ENCODE measurements at regions of chr12 and their contacts with region 1.

Region 1: GRCh38 chr12:54207484-54208294 is 18.9 kb upstream of the SMUG1 start:
- DNase-seq: peak; percentile 58 to 85 (median 80)
- ATAC-seq: peak; percentile 96
- H3K4me3 ChIP-seq: no peak overlapping the region
- H3K4me3 Mint-ChIP-seq: no peak overlapping the region
- H3K27ac ChIP-seq: no peak overlapping the region
- H3K27ac Mint-ChIP-seq: no peak overlapping the region
- H3K4me1 ChIP-seq: no peaks in the 10 kb centered on the region
- H3K4me1 Mint-ChIP-seq: peaks cover 3% of the 10 kb centered on the region
- H3K27me3 ChIP-seq: peaks cover 0 to 13% of the 10 kb centered on the region in 2 experiments
- H3K27me3 Mint-ChIP-seq: peaks cover 39% of the 10 kb centered on the region
- CTCF ChIP-seq: peak; percentile 85

Region 2: GRCh38 chr12:53295070-53295890 is 912.4 kb before region 1 on chr12 and contains the start of gene PFDN5:
- CTCF ChIA-PET with region 1: no interaction called
- POLR2A ChIA-PET with region 1: no interaction called
- intact Hi-C with region 1: no loop called
- DNase-seq: peak; percentile 72 to 95 (median 87)
- ATAC-seq: peak; percentile 92
- H3K4me3 ChIP-seq: peak within 1 kb of the TSS; percentile 75 to 88
- H3K4me3 Mint-ChIP-seq: peak within 1 kb of the TSS; percentile 99
- H3K27ac ChIP-seq: peak within 1 kb of the TSS; percentile 80 to 82
- H3K27ac Mint-ChIP-seq: peak within 1 kb of the TSS; percentile 99
- H3K4me1 ChIP-seq: peaks cover 28% of the 10 kb centered on the region
- H3K4me1 Mint-ChIP-seq: peaks cover 51% of the 10 kb centered on the region
- H3K27me3 ChIP-seq: no peaks in the 10 kb centered on the region
- H3K27me3 Mint-ChIP-seq: no peaks in the 10 kb centered on the region
- CTCF ChIP-seq: no peak
- total RNA-seq, gene PFDN5: 741 to 751 TPM

Region 3: DNA sequence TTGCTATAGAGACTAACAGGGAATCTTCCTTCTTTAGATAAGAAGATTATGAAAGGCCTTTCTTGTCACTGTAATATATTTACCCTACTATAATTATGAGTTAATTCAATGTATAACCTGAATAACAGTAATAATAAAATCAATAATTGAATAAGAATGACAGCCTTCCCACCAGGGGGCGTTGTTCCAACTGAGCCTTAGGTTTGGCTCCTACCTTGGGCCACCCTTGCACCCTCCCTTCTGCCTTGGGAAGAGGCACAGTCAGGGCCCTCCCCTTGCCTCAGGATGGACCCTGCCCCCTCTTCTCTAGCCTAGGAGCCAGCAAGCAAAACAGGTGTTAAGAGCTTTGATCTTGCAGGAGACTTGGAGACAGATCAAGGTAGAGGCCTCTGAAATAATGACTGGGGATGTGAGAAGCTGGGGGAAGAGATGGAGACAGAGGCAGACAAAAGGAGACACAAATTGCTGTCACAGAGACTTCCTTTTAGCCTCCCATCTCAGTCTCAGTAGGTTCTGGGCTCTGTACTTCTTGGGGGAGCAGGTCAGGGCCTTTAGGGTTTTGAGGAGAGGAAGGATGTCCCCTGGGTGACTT is 415.9 kb before region 1 on chr12:
- CTCF ChIA-PET with region 1: interaction called, 4 read pairs
- POLR2A ChIA-PET with region 1: no interaction called
- intact Hi-C with region 1: loop called in 1 of 2 experiments (anchors 5 kb)
- DNase-seq: peak in 8 of 9 experiments; percentile 1 to 53 (median 33)
- ATAC-seq: no peak
- H3K4me3 ChIP-seq: no peak overlapping the region
- H3K4me3 Mint-ChIP-seq: no peak overlapping the region
- H3K27ac ChIP-seq: no peak overlapping the region
- H3K27ac Mint-ChIP-seq: no peak overlapping the region
- H3K4me1 ChIP-seq: no peaks in the 10 kb centered on the region
- H3K4me1 Mint-ChIP-seq: no peaks in the 10 kb centered on the region
- H3K27me3 ChIP-seq: peaks cover 0 to 4% of the 10 kb centered on the region in 2 experiments
- H3K27me3 Mint-ChIP-seq: peaks cover 17% of the 10 kb centered on the region
- CTCF ChIP-seq: peak; percentile 54

Region 4: DNA sequence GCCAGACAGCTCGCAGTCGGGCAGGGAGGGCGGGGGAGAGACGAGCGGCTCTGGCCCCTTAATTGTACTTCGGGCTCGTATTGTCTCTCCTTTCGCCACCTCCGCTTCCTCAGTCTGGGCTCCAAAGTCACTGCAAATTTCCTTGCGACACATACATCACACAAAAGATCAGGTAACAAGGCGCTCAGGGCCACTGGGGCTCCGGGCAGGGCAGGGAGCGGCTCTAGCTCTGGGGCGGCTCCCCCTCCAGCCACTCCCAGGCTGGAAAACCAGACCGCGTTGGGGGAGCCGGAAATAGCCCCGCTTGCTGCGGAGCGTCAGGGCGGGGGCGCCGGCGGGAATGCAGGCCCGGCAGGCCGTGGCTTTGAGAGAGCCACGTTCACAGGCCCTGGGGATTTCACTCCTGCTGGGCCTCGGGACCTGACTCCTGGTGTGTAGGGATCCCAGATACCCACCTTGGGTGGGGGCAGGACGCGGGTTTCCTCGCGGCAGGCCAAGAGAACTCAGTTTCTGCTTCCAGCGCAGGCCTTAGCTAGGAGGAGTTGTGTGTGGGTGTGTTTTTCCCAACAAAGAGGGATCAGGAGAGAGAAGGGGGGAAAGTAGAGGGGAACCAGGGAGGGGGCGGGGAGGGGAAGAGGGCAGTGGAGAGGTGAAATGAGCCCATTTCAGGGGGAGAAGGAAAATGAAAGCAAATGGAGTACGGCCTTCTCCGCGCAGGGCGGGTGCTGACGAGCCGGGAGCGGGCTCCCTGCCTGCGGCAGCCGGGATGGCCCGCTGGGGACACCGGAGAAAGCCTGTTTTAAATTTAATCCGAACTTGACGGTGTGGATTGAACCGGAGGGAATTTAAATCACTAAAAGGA is 212.1 kb before region 1 on chr12:
- CTCF ChIA-PET with region 1: interaction called, 372 read pairs
- POLR2A ChIA-PET with region 1: no interaction called
- intact Hi-C with region 1: no loop called
- DNase-seq: peak in 2 of 9 experiments; percentile 41 to 59
- ATAC-seq: peak; percentile 41
- H3K4me3 ChIP-seq: peak overlapping the region; percentile 56 to 58
- H3K4me3 Mint-ChIP-seq: peak overlapping the region; percentile 80
- H3K27ac ChIP-seq: no peak overlapping the region
- H3K27ac Mint-ChIP-seq: no peak overlapping the region
- H3K4me1 ChIP-seq: peaks cover 49% of the 10 kb centered on the region
- H3K4me1 Mint-ChIP-seq: peaks cover 38% of the 10 kb centered on the region
- H3K27me3 ChIP-seq: peaks cover 82 to 93% of the 10 kb centered on the region in 2 experiments
- H3K27me3 Mint-ChIP-seq: peaks cover 86% of the 10 kb centered on the region
- CTCF ChIP-seq: no peak

Region 5: DNA sequence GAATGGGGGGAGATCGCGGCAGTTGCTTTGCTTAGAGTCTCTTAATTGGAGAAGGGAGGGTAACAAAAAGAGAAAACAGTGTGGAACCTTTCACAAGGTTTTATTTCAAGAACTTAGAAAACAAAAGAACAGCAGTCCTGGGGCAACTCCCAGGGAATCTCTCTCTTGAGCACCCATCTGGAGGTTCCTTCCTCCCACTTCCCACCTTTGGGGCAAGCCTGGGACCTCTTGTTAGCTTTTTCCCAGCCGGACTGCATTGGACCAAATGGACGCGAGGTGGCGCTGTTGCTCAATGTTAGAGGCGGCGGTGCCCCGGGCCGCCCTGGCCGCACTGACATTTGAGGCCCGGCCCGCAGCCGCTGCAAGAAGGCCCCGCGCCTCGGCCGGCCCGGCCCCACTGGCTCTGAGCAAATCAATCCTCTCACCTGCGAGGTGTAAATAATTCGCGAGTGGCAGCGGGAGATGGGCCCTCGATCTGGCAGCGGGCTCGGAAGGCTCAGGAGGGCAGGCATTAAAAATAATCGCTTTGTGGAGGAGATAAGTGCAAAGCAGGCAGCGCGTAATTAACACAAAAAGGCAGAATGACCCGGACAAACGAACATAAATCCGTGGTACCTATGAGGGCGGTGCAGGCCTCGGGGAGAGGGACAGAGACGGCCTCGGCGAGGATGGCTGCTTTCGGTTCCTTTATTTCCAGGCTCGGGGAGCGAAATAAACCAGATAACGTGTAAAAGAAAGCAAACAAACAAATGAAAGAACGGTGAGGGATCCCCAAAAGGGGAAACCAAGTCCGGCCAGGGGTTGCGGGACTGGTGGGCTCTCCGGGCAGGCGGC is 201.6 kb before region 1 on chr12:
- CTCF ChIA-PET with region 1: interaction called, 372 read pairs
- POLR2A ChIA-PET with region 1: interaction called, 4 read pairs
- intact Hi-C with region 1: loop called (anchors 1 kb)
- DNase-seq: peak; percentile 71 to 92 (median 86)
- ATAC-seq: peak; percentile 80
- H3K4me3 ChIP-seq: peak overlapping the region; percentile 24 to 62
- H3K4me3 Mint-ChIP-seq: peak overlapping the region; percentile 82
- H3K27ac ChIP-seq: no peak overlapping the region
- H3K27ac Mint-ChIP-seq: no peak overlapping the region
- H3K4me1 ChIP-seq: peaks cover 22% of the 10 kb centered on the region
- H3K4me1 Mint-ChIP-seq: peaks cover 25% of the 10 kb centered on the region
- H3K27me3 ChIP-seq: peaks cover 72 to 85% of the 10 kb centered on the region in 2 experiments
- H3K27me3 Mint-ChIP-seq: peaks cover 87% of the 10 kb centered on the region
- CTCF ChIP-seq: peak; percentile 93

Region 6: DNA sequence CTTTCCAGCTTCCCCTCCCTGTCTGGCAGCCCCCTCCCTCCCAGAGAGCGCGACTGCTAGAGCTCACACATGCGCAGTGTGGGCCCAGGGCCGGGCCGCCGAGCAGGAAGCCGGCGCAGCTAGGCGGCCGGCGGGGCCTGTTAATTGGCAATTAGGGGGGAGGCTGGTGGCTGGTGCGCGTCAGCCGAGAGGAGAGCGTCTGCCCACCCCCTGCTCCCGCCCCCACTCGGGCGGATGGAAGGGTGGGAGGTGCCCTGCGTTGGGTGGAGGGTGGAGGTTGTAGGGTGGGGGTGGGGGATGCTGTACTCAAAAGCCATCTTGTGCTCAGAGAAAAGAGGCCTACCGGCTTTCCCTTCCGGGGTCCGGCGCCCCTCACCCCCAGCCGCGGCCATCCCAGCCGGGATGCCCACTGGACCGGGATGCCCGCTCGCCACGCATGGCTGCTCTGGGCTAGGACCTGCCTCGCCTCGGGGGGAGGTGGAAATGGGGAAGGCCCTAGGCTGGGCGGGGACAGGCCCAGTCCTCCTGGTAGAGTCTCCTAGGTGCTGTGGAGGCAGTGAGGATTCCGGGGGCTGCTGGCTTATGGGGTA is 189.7 kb before region 1 on chr12:
- CTCF ChIA-PET with region 1: interaction called, 256 read pairs
- POLR2A ChIA-PET with region 1: interaction called, 3 read pairs
- intact Hi-C with region 1: no loop called
- DNase-seq: peak; percentile 53 to 91 (median 70)
- ATAC-seq: peak; percentile 86
- H3K4me3 ChIP-seq: peak overlapping the region; percentile 69 to 71
- H3K4me3 Mint-ChIP-seq: peak overlapping the region; percentile 83
- H3K27ac ChIP-seq: peak overlapping the region in 1 of 2 experiments; percentile 56
- H3K27ac Mint-ChIP-seq: no peak overlapping the region
- H3K4me1 ChIP-seq: peaks cover 16% of the 10 kb centered on the region
- H3K4me1 Mint-ChIP-seq: peaks cover 22% of the 10 kb centered on the region
- H3K27me3 ChIP-seq: peaks cover 41 to 48% of the 10 kb centered on the region in 2 experiments
- H3K27me3 Mint-ChIP-seq: peaks cover 71% of the 10 kb centered on the region
- CTCF ChIP-seq: no peak

Region 7: DNA sequence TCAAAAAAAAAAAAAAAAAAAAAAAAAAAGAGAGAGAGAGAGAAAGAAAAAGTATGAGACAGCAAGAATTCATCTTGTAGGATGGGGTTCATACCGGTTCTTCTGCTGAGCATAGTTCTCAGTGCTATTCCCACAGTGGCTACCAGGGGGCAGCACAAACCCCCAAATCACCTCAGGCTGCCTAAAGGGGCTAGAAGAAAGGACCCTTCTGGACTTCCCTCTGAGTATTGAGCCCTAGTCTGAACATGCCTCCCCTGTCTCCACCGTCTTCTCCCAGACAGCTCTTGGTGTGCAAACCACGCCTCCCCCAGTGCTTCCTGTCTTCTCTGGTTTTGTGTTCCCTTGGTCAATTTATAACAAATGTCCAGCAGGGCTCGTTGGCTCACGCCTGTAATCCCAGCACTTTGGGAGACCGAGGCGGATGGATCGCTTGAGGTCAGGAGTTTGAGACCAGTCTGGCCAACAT is 12.4 kb after region 1 on chr12:
- CTCF ChIA-PET with region 1: interaction called, 49 read pairs
- POLR2A ChIA-PET with region 1: no interaction called
- intact Hi-C with region 1: no loop called
- DNase-seq: peak; percentile 39 to 76 (median 62)
- ATAC-seq: peak; percentile 62
- H3K4me3 ChIP-seq: no peak overlapping the region
- H3K4me3 Mint-ChIP-seq: no peak overlapping the region
- H3K27ac ChIP-seq: no peak overlapping the region
- H3K27ac Mint-ChIP-seq: no peak overlapping the region
- H3K4me1 ChIP-seq: peaks cover 22% of the 10 kb centered on the region
- H3K4me1 Mint-ChIP-seq: peaks cover 26% of the 10 kb centered on the region
- H3K27me3 ChIP-seq: no peaks in the 10 kb centered on the region
- H3K27me3 Mint-ChIP-seq: peaks cover 8% of the 10 kb centered on the region
- CTCF ChIP-seq: peak; percentile 62

Region 8: GRCh38 chr12:54407183-54407905 is 199.7 kb after region 1 on chr12:
- CTCF ChIA-PET with region 1: no interaction called
- POLR2A ChIA-PET with region 1: no interaction called
- intact Hi-C with region 1: no loop called
- DNase-seq: peak in 2 of 9 experiments; percentile 4 to 8
- ATAC-seq: no peak
- H3K4me3 ChIP-seq: no peak overlapping the region
- H3K4me3 Mint-ChIP-seq: no peak overlapping the region
- H3K27ac ChIP-seq: peak overlapping the region in 1 of 2 experiments; percentile 29
- H3K27ac Mint-ChIP-seq: peak overlapping the region; percentile 81
- H3K4me1 ChIP-seq: peaks cover 38% of the 10 kb centered on the region
- H3K4me1 Mint-ChIP-seq: peaks cover 54% of the 10 kb centered on the region
- H3K27me3 ChIP-seq: no peaks in the 10 kb centered on the region
- H3K27me3 Mint-ChIP-seq: no peaks in the 10 kb centered on the region
- CTCF ChIP-seq: no peak

Measured in CD8-positive, alpha-beta T cell (primary cell).